IMR-90 (cell line): ENCODE measurements at regions of chr7 and their contacts with region 1.

Region 1: GRCh38 chr7:100568896-100569844 is 4.5 kb downstream of the SAP25 start:
- DNase-seq: no peak
- ATAC-seq: peak; percentile 38
- H3K4me3 ChIP-seq: no peak overlapping the region
- H3K27ac ChIP-seq: no peak overlapping the region
- H3K4me1 ChIP-seq: peaks cover 2% of the 10 kb centered on the region; the same call in 1 of the 2 replicates
- H3K27me3 ChIP-seq: peaks cover 3% of the 10 kb centered on the region; the same call in 1 of the 2 replicates
- CTCF ChIP-seq: peak; percentile 24; the same call in 1 of the 2 replicates
- POLR2A ChIP-seq: no peak
- RAD21 ChIP-seq: no peak

Region 2: DNA sequence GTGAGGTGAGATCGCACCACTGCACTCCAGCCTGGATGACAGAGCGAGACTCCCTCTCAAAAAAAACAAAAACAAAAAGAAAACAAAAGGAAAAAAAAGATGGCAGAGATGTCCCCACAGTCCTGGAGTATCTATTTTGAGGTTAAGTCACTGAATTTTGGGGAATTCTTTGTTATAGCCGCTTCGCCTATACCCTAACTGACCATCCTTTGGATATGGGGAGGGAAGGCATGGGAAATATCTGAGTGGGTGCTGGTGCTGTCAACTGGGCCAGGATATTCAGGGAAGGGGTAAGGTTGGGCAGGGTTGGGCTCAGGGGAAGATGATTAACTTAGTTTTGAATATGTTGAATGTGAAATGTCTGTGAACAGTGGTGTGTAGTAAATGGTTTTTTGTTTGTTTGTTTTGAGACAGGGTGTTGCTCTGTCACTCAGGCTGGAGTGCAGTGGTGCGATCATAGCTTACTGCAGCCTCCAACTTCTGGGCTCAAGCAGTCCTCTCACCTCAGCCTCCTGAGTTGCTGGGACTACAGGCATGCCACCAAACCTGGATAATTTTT is 96.1 kb after region 1 on chr7:
- CTCF ChIA-PET with region 1: no interaction called
- POLR2A ChIA-PET with region 1: no interaction called
- dilution Hi-C with region 1: no loop called
- in situ Hi-C with region 1: loop called (anchors 5 kb)
- intact Hi-C with region 1: no loop called
- DNase-seq: no peak
- ATAC-seq: no peak
- H3K4me3 ChIP-seq: no peak overlapping the region
- H3K27ac ChIP-seq: no peak overlapping the region
- H3K4me1 ChIP-seq: no peaks in the 10 kb centered on the region
- H3K27me3 ChIP-seq: peaks cover 2% of the 10 kb centered on the region; the same call in 1 of the 2 replicates
- CTCF ChIP-seq: no peak
- POLR2A ChIP-seq: no peak
- RAD21 ChIP-seq: no peak